ENCODE measurements at regions of chr19 and their contacts with region 1.

Region 1: DNA sequence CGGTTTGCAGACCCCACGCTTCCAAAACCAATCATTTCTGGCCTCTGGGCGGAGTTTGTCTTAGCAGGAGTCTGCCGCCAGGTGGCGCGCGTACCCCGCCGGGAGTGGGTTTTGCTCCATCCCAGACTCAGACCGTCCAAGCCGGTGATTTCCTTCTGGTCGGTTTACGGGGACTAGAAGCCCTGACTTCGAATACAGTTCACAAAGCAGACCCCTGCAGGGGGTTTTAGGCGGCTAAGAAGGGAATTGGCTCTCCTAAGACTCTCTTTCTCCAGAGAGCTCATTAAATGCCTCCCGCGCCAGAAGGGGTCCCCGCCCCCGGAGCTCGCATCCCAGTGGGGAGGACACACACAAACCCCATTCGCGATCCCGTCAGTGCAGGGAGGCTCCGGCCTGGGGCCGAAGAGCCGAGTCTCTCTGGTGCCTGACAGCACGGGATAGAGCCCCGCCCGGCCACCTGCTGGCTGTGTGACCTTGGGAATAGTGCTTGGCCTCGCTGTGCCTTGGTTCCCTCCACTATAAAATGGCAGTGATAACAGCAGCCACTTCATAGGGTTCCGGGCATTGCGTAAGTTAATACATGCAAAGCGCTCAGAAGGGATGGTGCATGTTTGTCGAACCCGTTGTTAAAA is 8.6 kb upstream of the NUP62 start:
- DNase-seq: peak; percentile 57 to 98
- H3K4me3 ChIP-seq: peak overlapping the region in 2 of 4 experiments; percentile 10 to 48; a peak in 3 of 8 replicates
- H3K27ac ChIP-seq: no peak overlapping the region
- H3K4me1 ChIP-seq: no peaks in the 10 kb centered on the region; a peak in 1 of 7 replicates
- H3K27me3 ChIP-seq: no peaks in the 10 kb centered on the region
- CTCF ChIP-seq: peak; percentile 88 to 97 (median 93)
- EP300 ChIP-seq: no peak
- POLR2A ChIP-seq: no peak
- RAD21 ChIP-seq: peak; percentile 99

Region 2: GRCh38 chr19:49954079-49954829 is 16.4 kb after region 1 on chr19:
- CTCF ChIA-PET with region 1: interaction called, 69 read pairs
- POLR2A ChIA-PET with region 1: interaction called, 7 read pairs
- DNase-seq: no peak
- H3K4me3 ChIP-seq: no peak overlapping the region
- H3K27ac ChIP-seq: no peak overlapping the region
- H3K4me1 ChIP-seq: peaks cover 0 to 17% (median 9%) of the 10 kb centered on the region in 4 experiments; a peak in 6 of 7 replicates
- H3K27me3 ChIP-seq: no peaks in the 10 kb centered on the region
- CTCF ChIP-seq: no peak
- EP300 ChIP-seq: no peak
- POLR2A ChIP-seq: no peak
- RAD21 ChIP-seq: no peak

Region 3: GRCh38 chr19:50016225-50016807 is 78.5 kb after region 1 on chr19:
- CTCF ChIA-PET with region 1: no interaction called
- POLR2A ChIA-PET with region 1: no interaction called
- DNase-seq: no peak
- H3K4me3 ChIP-seq: no peak overlapping the region
- H3K27ac ChIP-seq: no peak overlapping the region
- H3K4me1 ChIP-seq: no peaks in the 10 kb centered on the region
- H3K27me3 ChIP-seq: no peaks in the 10 kb centered on the region
- CTCF ChIP-seq: no peak
- EP300 ChIP-seq: no peak
- POLR2A ChIP-seq: no peak
- RAD21 ChIP-seq: no peak

Region 4: DNA sequence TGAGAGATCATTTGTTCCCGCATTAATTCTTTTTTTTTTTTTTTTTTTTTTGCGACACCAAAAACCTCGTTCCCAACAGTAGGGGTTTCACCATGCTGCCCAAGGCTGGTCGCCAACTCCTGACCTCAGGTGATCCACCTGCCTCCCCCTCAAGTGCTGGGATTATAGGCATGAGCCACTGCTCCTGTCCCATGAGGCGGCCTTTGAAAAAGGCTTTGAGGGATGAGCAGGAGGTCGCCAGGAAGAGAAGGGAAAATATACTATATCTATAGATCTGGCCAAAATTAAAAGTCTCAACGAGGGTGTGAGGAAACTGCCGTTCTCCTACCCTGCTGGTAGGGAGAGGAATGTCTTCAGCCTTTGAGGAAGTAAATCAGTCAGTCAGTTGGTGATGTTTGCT is 114.1 kb after region 1 on chr19:
- CTCF ChIA-PET with region 1: no interaction called
- POLR2A ChIA-PET with region 1: no interaction called
- DNase-seq: no peak
- H3K4me3 ChIP-seq: no peak overlapping the region
- H3K27ac ChIP-seq: no peak overlapping the region
- H3K4me1 ChIP-seq: no peaks in the 10 kb centered on the region
- H3K27me3 ChIP-seq: no peaks in the 10 kb centered on the region
- CTCF ChIP-seq: no peak
- EP300 ChIP-seq: no peak
- POLR2A ChIP-seq: no peak
- RAD21 ChIP-seq: no peak

Measured in H1 (cell line).